Astrocyte of the cerebellum (primary cell): ENCODE measurements at regions of chr7 and their contacts with region 1.

Region 1: DNA sequence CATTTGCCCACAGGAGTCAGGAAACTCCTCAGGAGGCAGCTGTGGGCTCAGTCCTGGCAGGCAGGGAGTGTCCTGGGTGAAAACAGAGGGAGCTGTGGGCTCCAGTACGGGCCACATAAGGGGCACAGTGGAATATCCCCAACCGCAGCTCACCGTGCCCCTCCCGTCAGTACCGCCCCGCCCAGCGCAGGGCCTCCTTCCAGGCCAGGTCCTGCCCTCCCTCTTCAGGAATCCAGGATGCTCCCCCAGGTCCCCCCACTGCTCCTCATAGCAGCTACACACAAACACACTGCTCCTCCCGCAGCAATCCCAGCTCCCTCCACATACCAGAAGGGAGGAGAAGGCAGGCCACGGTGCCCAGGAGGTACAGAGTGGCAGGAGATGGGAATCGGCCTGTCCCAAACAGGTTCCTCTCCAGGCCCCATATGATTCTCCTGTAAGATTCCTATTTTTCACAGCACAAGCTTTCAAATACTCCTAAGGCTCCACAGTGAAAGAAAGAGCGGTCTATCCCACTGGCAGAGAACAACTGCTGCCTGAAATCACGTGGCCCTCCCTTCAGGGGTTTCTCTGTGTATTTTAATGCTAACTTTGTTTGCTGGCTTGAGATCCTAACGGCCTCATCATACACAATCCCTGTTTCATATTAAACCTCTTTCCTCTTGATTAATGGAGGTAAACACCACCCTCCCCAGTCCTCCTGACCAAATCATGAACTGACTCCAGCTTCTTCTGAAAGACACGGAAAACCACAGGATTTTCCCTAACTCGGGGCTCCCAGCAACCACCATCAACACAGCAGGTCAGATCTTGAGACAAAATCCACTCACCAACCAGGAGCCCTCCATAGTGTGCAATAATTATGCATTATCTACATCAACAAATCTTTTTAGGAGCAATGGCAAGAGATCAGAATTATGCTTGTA is 178.7 kb downstream of the TNS3 start:
- DNase-seq: peak; percentile 84
- H3K4me3 ChIP-seq: no peak overlapping the region
- CTCF ChIP-seq: no peak

Region 2: DNA sequence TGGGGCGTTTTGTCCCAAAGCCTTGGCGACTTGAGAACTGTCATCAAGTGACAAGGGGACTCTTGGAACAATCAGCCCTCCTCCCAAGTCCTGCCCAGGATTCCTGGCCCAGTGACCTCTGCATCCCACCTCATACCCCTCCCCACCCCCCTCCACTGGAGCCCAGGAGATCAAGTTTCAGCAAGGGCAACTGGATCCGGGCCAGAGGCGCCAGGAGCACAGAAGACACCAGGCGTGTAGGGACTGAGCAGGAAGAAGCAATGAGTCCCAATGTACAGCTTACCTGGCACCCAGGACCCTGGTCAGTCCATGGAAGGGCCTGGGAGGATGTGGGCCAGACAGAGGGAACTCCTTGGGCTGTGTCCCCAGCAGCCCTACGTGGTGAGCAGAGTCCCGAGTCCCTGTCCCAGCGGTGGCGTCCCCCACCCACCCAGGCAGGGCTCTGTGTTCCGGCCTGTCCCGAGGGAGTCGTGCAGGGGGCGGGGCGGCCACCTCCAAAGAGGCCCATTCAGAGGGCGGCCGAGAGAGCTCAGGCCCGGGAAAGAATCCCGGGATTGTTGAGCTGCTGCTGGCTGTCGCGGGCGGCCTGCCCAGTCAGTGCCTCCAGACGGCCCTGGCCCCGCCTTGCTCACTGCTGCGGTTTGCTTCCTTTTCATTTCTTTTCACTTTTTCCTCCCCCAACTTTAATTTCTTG is 75.4 kb before region 1 on chr7:
- in situ Hi-C with region 1: loop called (anchors 5 kb)
- DNase-seq: peak; percentile 67
- H3K4me3 ChIP-seq: peak overlapping the region; percentile 36
- CTCF ChIP-seq: no peak

Region 3: DNA sequence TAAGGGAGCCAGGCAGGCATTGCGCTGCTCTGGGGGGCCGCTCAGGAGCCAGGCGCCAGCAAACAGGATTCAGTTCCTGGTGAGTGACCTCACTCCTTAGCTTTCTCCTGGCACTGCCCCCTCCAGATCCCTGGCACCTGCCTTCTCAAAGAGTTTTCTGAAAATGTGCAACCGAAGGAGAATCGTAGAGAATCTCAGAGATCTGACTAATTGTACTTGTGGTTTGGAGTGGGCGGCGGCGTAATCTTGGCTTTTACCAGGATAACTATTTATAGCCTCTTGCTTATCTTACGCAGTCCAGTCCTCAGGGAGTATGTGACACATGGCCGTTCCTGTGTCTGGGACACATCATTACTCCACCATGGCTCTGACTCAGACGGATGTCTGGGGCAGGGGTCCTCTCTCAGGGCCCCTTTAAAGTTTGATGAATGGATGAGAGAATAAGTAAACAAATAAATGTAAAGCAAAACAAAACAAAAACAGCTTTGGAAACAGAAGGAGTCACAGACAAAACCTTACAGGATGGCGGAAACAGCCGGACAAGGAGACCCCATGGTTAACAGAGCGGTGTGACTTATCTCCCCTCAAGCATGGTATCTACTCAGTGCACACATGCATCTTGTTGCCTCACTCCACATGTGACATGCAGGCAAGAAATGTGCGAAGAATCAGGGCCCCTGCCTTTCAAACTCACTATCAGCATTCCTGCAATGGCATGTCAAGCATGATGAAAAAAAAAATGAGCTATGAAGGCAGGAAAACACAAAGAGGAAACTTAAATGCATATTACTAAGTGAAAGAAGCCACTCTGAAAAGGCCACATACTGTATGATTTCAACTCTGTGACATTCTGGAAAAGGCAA is 79.0 kb after region 1 on chr7:
- in situ Hi-C with region 1: no loop called
- DNase-seq: peak; percentile 59
- H3K4me3 ChIP-seq: no peak overlapping the region
- CTCF ChIP-seq: no peak

Region 4: DNA sequence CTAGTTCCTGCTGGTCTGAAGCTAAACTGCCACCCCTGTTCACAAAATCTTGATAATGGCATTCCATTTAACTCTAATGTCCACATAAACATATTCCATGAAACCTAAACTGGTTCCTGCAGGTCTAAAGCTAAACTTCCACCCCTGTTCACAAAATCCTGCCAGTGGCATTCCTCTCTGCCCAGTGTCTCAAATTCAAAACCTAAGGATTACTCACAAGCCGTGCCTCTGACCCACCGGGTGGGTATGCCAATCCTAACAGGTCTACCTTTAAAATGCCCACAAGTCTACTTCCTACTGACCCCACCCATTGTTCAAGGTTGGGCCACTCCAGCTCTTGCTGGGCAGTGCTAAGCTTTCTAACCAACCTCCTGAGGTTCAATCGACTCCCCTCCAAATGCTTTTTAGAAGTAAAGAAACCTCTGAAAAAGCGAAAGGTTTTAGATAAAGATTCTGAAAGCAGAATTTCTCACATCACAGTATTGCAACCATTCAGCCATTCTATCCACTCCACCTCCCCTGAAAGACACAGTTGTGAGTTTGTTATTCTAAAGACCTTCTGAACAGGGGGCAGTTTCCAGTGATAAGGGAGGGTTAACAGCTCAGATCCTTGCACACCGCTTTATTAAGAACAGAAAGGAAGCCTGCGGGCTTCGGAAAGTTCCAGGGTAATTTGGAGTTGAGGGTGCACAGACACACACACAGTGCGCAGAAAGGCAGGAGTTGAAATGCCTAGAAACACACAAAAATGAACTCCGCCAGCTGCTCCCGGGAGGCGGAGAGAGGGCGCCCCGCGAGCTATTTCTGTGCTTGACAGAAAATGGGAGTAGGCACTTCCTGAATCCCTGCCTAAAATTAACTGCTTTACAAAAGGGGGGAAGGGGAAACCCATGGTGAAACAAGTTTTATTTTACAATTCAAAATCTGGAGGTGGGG is 91.0 kb after region 1 on chr7:
- in situ Hi-C with region 1: no loop called
- DNase-seq: no peak
- H3K4me3 ChIP-seq: no peak overlapping the region
- CTCF ChIP-seq: no peak